ENCODE measurements at regions of chr6 and their contacts with region 1.

Region 1: DNA sequence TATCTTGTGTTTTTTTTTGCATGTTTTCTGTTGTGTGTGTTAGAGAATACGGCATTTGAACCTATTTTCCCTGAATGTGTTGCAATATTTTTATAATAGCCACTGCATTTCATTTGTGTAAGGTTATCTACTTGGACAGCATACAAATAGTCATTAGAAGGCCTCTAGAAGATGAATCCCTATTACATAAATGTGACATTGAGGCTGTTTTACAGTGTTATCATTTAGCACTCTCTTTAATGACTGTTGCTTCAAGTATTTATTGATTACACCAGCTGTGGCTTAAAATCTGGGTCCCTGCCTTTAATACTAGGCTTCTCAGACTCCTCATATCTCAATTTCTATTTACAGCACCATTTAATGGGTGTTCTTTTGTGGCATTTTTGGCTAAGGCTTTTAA is 465.8 kb downstream of the FRK start:
- DNase-seq: no peak
- H3K4me3 ChIP-seq: no peak overlapping the region
- CTCF ChIP-seq: no peak
- POLR2A ChIP-seq: no peak

Region 2: DNA sequence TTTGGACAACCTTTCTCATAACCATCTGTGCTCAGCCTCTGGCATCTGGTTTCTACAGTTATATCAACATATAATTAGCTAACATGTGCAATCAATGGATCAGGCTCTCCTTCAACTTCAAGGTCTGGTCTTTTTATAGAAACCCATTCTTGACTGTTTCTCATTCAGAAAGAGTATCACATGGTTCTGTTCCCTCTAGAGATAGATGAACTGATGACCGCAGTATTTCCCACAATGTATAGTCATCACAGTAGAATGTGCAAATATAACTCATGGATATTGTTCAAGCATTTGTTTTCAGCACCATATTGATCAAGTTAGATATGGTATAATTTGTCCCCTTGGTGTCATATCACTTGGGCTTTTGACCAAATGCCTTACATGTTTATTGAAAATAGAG is 190.4 kb before region 1 on chr6:
- intact Hi-C with region 1: loop called (anchors 5 kb)
- DNase-seq: no peak
- H3K4me3 ChIP-seq: no peak overlapping the region
- CTCF ChIP-seq: no peak
- POLR2A ChIP-seq: no peak

Measured in lower leg skin (tissue), 4 donors.